Left lung (tissue), 14 donors: ENCODE measurements at regions of chr17 and their contacts with region 1.

Region 1: GRCh38 chr17:45197555-45198334 is 23.9 kb upstream of the FMNL1 start:
- DNase-seq: peak; percentile 79 to 100 (median 92)
- ATAC-seq: peak; percentile 100
- H3K4me3 ChIP-seq: no peak overlapping the region
- H3K27ac ChIP-seq: peak overlapping the region; percentile 51 to 57
- H3K4me1 ChIP-seq: peaks cover 5 to 38% of the 10 kb centered on the region in 2 donors
- H3K27me3 ChIP-seq: no peaks in the 10 kb centered on the region
- CTCF ChIP-seq: peak; percentile 98 to 99

Region 2: GRCh38 chr17:45135192-45135977 is 62.4 kb before region 1 on chr17 and contains the start of gene ACBD4:
- intact Hi-C with region 1: loop called (anchors 5 to 10 kb)
- DNase-seq: peak; percentile 94 to 98 (median 98)
- ATAC-seq: peak; percentile 82
- H3K4me3 ChIP-seq: peak within 1 kb of the TSS; percentile 64 to 68
- H3K27ac ChIP-seq: peak within 1 kb of the TSS in 1 of 2 donors; percentile 74
- H3K4me1 ChIP-seq: peaks cover 13 to 32% of the 10 kb centered on the region in 2 donors
- H3K27me3 ChIP-seq: no peaks in the 10 kb centered on the region
- CTCF ChIP-seq: peak; percentile 100
- polyA plus RNA-seq, gene ACBD4: 12.5 to 15.9 (median 15.0) TPM

Region 3: GRCh38 chr17:45307290-45308015 is 109.7 kb after region 1 on chr17:
- intact Hi-C with region 1: no loop called
- DNase-seq: peak in 1 of 4 donors; percentile 52
- ATAC-seq: peak; percentile 22
- H3K4me3 ChIP-seq: no peak overlapping the region
- H3K27ac ChIP-seq: peak overlapping the region; percentile 83 to 85
- H3K4me1 ChIP-seq: peaks cover 54 to 88% of the 10 kb centered on the region in 2 donors
- H3K27me3 ChIP-seq: no peaks in the 10 kb centered on the region
- CTCF ChIP-seq: no peak